Sigmoid colon (tissue), 7 donors: ENCODE measurements at regions of chr1 and their contacts with region 1.

Region 1: GRCh38 chr1:67561704-67562113 is 123.3 kb upstream of the GADD45A start:
- DNase-seq: peak; percentile 92
- H3K4me3 ChIP-seq: no peak overlapping the region
- H3K27ac ChIP-seq: peak overlapping the region in 2 of 4 donors; percentile 5 to 11
- H3K4me1 ChIP-seq: peaks cover 0 to 16% (median 9%) of the 10 kb centered on the region in 4 donors
- H3K27me3 ChIP-seq: no peaks in the 10 kb centered on the region
- CTCF ChIP-seq: peak; percentile 44 to 80 (median 76)
- EP300 ChIP-seq: no peak
- POLR2A ChIP-seq: no peak

Region 2: GRCh38 chr1:67618285-67619018 is 56.7 kb after region 1 on chr1:
- intact Hi-C with region 1: loop called (anchors 5 kb)
- DNase-seq: peak; percentile 76
- H3K4me3 ChIP-seq: peak overlapping the region in 2 of 4 donors; percentile 4 to 11
- H3K27ac ChIP-seq: peak overlapping the region; percentile 37 to 71 (median 59)
- H3K4me1 ChIP-seq: peaks cover 0 to 4% (median 2%) of the 10 kb centered on the region in 4 donors
- H3K27me3 ChIP-seq: no peaks in the 10 kb centered on the region
- CTCF ChIP-seq: no peak
- EP300 ChIP-seq: no peak
- POLR2A ChIP-seq: no peak

Region 3: DNA sequence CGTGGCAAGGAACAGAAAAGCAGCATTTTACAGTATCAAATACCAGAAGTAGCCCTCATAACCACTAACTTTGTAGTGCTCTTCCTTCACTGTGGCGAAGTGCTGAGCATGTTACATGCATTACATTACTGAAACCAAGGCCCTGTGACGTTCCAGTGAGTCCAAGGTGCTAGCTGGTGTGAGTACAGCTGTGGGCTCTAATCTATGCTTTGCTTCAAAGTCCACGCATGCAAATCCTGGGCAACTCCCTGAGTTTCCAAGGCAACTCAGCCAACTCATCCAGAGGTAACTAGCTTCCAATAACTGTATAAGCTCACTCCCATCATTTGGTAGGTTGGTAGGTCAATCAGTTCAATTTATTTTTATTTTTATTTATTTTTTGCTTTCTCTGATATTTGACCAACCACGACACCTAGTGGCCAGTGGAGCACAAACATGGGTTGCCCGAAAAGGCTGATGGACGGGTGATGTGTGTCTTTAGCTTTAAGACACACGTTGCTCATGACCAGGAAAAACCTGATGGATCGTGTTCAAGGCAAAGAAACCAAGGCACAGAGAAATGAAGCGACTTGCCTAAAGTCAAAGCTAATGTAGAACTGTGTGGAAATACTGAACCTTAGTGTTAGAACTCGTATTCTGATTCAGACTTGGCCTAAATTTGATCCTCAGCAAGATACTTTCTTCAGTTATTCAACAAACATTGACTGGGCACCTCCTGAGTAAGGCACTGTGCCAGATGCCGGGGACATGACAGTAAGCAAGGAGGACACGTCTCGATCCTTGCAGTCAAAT is 198.5 kb after region 1 on chr1:
- intact Hi-C with region 1: loop called (anchors 1 kb)
- DNase-seq: no peak
- H3K4me3 ChIP-seq: no peak overlapping the region
- H3K27ac ChIP-seq: peak overlapping the region in 3 of 4 donors; percentile 37 to 56 (median 44)
- H3K4me1 ChIP-seq: peaks cover 0 to 22% (median 9%) of the 10 kb centered on the region in 4 donors
- H3K27me3 ChIP-seq: no peaks in the 10 kb centered on the region
- CTCF ChIP-seq: peak; percentile 58 to 92 (median 84)
- EP300 ChIP-seq: no peak
- POLR2A ChIP-seq: no peak

Region 4: GRCh38 chr1:67832737-67833601 is 271.3 kb after region 1 on chr1 and contains the start of gene GNG12:
- intact Hi-C with region 1: loop called (anchors 10 kb)
- DNase-seq: peak; percentile 89
- H3K4me3 ChIP-seq: peak within 1 kb of the TSS; percentile 67 to 78 (median 72)
- H3K27ac ChIP-seq: peak within 1 kb of the TSS; percentile 81 to 92 (median 84)
- H3K4me1 ChIP-seq: peaks cover 0 to 32% (median 18%) of the 10 kb centered on the region in 4 donors
- H3K27me3 ChIP-seq: no peaks in the 10 kb centered on the region
- CTCF ChIP-seq: no peak
- EP300 ChIP-seq: no peak
- POLR2A ChIP-seq: no peak
- total RNA-seq, gene GNG12: 41.9 to 58.2 (median 46.7) TPM